ENCODE measurements at regions of chr10 and their contacts with region 1.

Region 1: DNA sequence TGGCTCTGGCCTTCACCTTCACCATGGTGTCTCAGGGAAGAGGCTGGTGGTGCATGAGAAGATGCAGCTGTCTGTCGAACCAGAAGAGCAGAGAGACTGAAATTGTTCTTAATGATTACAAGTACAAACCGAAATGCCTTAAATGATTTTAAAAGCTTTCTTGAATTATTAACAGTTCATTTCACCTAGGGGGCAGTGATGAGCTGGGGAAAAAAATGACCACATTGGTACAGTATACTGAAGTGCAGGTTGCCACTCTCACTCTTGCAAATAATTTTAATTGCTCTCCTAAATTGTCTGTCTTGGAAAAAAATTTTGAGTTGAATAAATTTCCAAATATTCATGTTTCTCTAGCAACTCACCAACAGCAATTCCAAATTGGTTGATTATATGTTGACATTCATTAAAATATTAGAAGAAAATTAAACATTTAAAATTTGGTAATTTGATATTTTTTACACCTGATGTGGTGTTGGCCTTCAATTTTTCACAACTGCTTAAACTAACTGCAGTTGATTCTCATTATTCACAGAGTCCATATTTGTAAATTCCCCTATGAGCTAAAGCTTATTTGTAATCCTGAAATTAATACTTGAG is 692.6 kb downstream of the ZWINT start:
- DNase-seq: no peak
- H3K4me3 ChIP-seq: no peak overlapping the region
- H3K27ac ChIP-seq: no peak overlapping the region
- H3K4me1 ChIP-seq: no peaks in the 10 kb centered on the region
- H3K27me3 ChIP-seq: no peaks in the 10 kb centered on the region
- CTCF ChIP-seq: peak in 2 of 3 experiments; percentile 38 to 58; a peak in 2 of 4 replicates
- EP300 ChIP-seq: no peak
- POLR2A ChIP-seq: no peak
- RAD21 ChIP-seq: peak; percentile 65 to 68

Region 2: GRCh38 chr10:55653531-55653930 is 14.9 kb before region 1 on chr10:
- CTCF ChIA-PET with region 1: interaction called, 13 read pairs
- POLR2A ChIA-PET with region 1: no interaction called
- DNase-seq: no peak
- H3K4me3 ChIP-seq: no peak overlapping the region
- H3K27ac ChIP-seq: no peak overlapping the region
- H3K4me1 ChIP-seq: no peaks in the 10 kb centered on the region
- H3K27me3 ChIP-seq: no peaks in the 10 kb centered on the region
- CTCF ChIP-seq: no peak
- EP300 ChIP-seq: no peak
- POLR2A ChIP-seq: no peak
- RAD21 ChIP-seq: no peak

Region 3: GRCh38 chr10:56116684-56117083 is 448.3 kb after region 1 on chr10:
- CTCF ChIA-PET with region 1: interaction called, 12 read pairs
- POLR2A ChIA-PET with region 1: no interaction called
- DNase-seq: no peak
- H3K4me3 ChIP-seq: no peak overlapping the region
- H3K27ac ChIP-seq: no peak overlapping the region
- H3K4me1 ChIP-seq: no peaks in the 10 kb centered on the region
- H3K27me3 ChIP-seq: no peaks in the 10 kb centered on the region
- CTCF ChIP-seq: peak in 2 of 3 experiments; percentile 30 to 57; a peak in 2 of 4 replicates
- EP300 ChIP-seq: no peak
- POLR2A ChIP-seq: no peak
- RAD21 ChIP-seq: peak; percentile 67 to 79

Measured in H1 (cell line).